PC-3 (cell line): ENCODE measurements at regions of chr1 and their contacts with region 1.

Region 1: DNA sequence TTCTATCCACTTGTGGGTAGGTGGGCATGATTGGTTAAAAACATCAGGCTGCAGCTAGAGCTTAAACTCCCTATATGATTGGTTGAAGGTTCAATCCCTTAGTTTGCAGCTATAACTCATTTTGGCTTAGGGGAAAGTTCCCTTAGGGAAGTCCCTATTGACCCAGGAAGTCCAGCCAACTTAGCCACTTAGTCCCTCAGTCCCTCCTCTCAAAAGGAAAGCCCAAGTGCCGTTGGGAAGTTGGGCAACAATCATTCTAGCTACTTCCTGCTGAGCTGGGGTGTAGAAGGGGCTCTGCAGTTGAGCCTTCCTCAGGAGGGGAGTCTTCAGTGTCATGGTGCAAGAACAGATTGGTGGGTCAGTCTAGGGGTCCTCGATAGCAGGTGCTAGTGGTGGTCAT is 12.2 kb downstream of the MSTO1 start:
- DNase-seq: no peak
- ATAC-seq: no peak
- H3K4me3 ChIP-seq: no peak overlapping the region
- H3K27ac ChIP-seq: no peak overlapping the region
- H3K4me1 ChIP-seq: no peaks in the 10 kb centered on the region
- H3K27me3 ChIP-seq: no peaks in the 10 kb centered on the region
- CTCF ChIP-seq: no peak

Region 2: DNA sequence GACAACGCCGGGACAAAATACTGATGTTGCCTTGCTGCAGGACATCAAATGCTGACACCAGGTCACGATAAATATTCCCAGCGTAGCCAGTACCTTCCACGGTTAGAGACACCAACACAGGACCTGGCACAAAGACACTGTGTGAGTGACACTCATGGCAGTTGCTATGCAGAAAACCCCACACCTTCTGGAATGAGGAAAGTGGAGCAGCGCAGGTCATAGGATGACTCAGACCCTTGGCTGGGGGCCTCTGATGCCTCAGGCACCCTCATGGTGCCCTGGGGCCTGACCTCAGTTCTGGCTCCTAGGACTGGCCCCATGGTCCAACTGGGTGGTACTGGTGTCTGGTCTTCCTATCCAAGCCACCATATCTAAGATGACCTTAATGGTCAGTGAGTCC is 595.6 kb before region 1 on chr1:
- CTCF ChIA-PET with region 1: no interaction called
- POLR2A ChIA-PET with region 1: no interaction called
- intact Hi-C with region 1: no loop called
- DNase-seq: peak; percentile 71
- ATAC-seq: peak; percentile 70
- H3K4me3 ChIP-seq: no peak overlapping the region
- H3K27ac ChIP-seq: no peak overlapping the region
- H3K4me1 ChIP-seq: peaks cover 7% of the 10 kb centered on the region
- H3K27me3 ChIP-seq: no peaks in the 10 kb centered on the region
- CTCF ChIP-seq: no peak

Region 3: DNA sequence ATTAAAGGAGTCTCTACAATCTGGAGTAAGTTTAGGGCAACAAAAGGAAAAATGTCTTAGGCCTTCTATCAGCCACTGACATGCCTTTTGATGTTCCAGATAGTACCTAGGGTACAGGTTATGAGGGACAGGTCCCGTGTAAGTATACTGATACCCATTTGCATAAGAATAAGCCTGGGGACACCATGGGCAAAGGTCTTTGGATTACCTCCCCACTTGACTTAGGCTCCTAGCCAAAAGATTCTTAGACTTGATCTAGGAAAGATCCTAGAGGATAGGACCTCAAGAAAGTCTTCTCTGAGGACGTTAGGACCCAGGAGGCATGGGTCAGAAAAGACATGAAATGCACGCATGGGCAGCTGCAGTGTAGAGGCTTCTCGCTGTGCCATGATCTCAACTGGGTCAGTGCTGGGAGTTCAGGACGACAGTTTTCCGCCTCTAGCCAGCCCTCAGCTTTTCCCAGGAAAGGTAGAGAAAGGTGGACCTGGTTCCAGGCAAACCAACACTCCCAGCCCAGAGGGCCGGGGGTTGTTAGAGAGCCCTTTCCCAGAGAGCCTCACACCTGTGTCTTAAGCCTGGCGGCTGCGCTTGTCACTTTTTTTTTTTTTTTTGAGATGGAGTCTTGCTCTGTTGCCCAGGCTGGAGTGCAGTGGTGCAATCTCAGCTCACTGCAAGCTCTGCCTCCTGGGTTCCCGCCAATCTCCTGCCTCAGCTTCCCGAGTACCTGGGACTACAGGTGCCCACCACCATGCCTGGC is 14.4 kb after region 1 on chr1:
- CTCF ChIA-PET with region 1: no interaction called
- POLR2A ChIA-PET with region 1: interaction called, 12 read pairs
- intact Hi-C with region 1: no loop called
- DNase-seq: no peak
- ATAC-seq: no peak
- H3K4me3 ChIP-seq: no peak overlapping the region
- H3K27ac ChIP-seq: no peak overlapping the region
- H3K4me1 ChIP-seq: no peaks in the 10 kb centered on the region
- H3K27me3 ChIP-seq: no peaks in the 10 kb centered on the region
- CTCF ChIP-seq: no peak